ENCODE measurements at regions of chr20 and their contacts with region 1.

Region 1: DNA sequence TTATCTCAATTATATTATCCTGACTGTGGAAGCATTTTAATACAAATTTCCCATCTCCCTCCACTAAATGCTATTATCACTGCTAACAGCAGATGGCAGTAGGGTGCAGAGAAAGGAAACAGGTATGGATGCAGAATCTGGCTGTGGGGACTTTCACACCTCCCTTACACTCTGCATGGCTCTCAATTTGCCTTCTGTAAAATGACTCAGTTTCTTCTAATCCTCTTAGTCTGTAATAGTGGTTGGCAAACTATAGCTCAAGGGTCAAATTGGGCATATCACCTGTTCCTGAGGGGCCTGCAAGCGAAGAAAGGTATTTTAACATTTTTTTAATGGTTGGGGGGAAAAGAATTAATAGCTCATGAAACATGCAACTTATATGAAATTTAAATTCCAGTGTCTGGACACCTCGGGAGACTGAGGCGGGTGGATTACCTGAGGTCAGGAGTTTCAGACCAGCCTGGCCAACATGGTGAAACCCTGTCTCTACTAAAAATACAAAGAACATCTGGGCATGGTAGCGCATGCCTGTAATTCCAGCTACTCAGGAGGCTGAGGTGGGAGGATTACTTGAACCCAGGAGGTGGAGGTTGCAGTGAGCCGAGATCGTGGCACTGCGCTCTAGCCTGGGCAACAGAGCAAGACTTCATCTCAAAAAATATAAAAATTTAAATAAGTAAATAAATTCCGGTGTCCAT is 83.5 kb downstream of the ZMYND8 start:
- DNase-seq: peak; percentile 82
- H3K4me3 Mint-ChIP-seq: no peak overlapping the region
- H3K27ac Mint-ChIP-seq: peak overlapping the region; percentile 90
- H3K4me1 Mint-ChIP-seq: peaks cover 42% of the 10 kb centered on the region
- H3K27me3 Mint-ChIP-seq: no peaks in the 10 kb centered on the region
- CTCF ChIP-seq: peak; percentile 92

Region 2: DNA sequence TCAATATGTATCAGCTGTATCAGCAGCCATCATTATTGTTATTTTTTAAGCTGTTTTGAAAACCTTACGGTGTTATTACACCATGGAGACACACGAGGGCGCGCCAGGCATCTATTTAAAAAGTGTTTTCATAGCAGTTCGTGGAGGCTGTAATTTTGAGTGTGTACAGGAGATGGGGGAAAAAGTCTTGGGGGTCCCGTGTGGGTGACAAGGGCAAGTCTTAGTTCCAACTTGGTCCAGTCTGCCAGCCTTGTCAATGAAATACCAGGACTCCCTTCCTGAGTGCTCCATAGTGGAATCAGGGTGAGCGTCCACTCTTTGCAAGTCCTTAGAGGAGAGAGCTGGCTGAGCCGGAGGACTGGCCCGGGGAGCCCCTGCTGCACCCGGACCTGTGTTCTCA is 520.3 kb before region 1 on chr20:
- CTCF ChIA-PET with region 1: interaction called, 10 read pairs
- intact Hi-C with region 1: no loop called
- DNase-seq: peak; percentile 80
- H3K4me3 Mint-ChIP-seq: peak overlapping the region; percentile 0
- H3K27ac Mint-ChIP-seq: no peak overlapping the region
- H3K4me1 Mint-ChIP-seq: peaks cover 12% of the 10 kb centered on the region
- H3K27me3 Mint-ChIP-seq: no peaks in the 10 kb centered on the region
- CTCF ChIP-seq: peak; percentile 82

Region 3: DNA sequence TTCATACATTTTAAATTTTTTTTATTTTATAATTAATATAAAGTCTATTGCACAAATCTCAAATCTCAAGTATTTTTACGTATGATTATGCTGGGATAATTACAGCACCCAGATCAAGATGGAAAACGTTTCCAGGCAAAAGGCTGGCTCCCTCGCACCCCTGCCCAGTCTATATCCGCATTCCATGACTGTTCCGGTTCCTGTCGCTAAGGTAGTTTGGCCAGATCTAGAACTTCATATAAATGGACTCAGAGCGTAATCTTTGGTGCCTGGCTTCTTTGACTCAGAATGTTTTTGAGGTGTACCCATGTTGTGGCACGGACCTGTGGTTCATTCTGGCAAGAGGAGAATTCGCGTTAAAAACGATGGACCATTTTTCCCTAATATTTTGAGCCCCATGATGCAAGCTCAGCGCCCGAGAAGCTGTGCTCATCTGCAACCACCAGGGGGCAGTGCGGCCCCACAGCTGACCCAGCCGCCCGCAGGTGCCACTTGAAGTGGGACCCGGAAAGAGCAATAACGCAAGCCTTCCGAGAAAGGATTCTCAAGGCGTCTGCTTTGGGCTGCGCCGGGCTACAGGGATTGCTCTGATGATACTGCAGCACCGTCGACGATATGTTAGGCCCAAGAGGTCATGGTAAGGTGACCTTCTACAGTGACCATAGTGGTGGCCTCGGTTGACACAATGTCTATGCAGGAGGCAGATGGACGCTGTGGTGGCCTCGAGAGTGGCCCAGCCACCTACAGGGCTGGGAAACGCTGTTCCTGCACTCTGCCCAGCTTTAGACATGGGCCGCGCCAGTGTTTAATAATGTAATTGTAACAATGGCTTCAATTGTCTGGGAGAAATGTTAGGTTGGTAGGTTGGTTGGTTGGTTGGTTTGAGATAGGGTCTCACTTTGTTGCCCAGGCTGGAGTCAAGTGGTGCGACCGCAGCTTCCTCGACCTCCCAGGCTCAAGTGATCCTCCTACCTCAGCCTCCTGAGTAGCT is 76.7 kb before region 1 on chr20:
- CTCF ChIA-PET with region 1: interaction called, 4 read pairs
- intact Hi-C with region 1: loop called (anchors 1 kb)
- DNase-seq: peak; percentile 95
- H3K4me3 Mint-ChIP-seq: peak overlapping the region; percentile 53
- H3K27ac Mint-ChIP-seq: no peak overlapping the region
- H3K4me1 Mint-ChIP-seq: peaks cover 38% of the 10 kb centered on the region
- H3K27me3 Mint-ChIP-seq: no peaks in the 10 kb centered on the region
- CTCF ChIP-seq: peak; percentile 99

Region 4: DNA sequence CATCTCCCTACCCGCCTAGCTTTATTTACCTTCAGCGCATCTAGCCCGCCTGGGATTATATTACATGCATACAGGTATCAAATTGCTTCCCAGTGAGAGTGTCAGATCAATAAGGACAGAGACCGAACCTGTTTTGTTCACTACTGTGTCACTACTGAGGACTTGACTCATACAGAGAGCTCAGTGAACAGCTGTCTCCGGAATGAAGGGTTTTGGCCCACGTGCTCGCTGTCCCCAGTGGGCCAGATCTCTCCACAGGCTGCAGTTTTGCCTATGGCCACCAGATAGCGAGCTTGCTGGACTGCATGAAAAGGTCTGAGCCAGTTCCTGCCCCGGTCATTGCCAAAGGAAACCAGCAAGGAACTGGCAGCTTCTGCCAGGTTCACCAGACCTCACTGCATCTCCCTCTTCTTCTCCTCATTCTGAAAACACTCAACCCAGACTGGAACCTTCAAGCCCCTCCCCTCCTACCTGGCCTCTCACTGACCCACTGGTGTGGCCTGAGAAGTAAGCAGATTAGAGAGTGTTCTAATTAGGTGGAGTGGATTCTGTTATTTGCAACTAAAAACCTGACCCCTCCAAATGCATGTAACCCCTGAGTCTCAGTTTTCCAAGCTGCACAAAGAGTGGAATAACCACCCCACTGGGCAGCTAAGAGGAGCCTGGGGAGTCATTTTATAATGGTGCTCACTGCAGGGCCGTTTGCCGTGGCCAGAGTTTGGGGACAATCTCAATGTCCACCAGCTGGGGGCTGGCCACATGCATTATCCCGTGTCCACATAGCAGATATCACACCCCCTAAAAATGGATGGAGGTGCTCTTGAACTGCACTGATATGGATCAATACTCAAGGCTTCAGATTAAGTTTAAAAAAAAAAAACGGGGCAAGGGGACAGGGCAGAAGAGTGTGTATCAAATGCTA is 67.2 kb before region 1 on chr20:
- CTCF ChIA-PET with region 1: interaction called, 30 read pairs
- intact Hi-C with region 1: no loop called
- DNase-seq: peak; percentile 93
- H3K4me3 Mint-ChIP-seq: peak overlapping the region; percentile 51
- H3K27ac Mint-ChIP-seq: peak overlapping the region; percentile 75
- H3K4me1 Mint-ChIP-seq: peaks cover 61% of the 10 kb centered on the region
- H3K27me3 Mint-ChIP-seq: no peaks in the 10 kb centered on the region
- CTCF ChIP-seq: peak; percentile 99

Region 5: DNA sequence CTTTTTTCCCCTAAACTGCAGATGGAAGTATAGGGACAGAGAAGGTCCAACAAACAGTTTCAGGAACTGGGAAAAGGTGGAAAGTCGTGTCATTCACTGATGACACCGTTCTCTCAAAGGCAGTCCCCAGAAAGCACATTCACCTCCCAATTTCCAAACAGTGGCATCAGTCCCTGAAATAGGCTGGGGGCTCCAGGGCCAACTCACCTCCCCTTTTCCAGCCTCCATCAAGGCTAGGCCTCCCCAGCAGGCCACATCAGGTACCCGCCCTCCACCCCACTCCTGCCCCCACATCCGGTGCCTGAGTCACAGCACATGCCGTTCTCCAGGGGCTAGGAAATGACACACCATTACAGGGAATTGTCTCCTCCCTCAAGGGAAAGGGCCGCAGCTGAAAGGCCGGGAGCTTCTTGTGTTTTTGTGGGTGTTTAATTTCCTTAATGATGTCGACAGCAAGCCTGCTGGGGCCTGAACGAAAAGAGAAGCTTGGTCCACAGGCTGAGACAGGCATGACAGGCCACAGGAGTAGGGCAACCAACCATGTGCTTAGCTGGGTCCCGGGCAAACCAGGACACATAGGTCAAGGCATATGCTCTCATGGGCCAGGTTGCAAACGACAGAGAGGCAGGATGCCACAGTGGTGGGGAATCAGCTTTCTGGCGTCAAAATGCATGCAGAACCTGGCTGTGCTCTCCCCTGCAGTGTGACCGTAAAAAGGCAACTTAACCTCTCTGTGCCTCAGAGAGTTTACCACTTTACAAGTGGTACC is 44.3 kb after region 1 on chr20:
- CTCF ChIA-PET with region 1: interaction called, 17 read pairs
- intact Hi-C with region 1: loop called (anchors 2 kb)
- DNase-seq: peak; percentile 87
- H3K4me3 Mint-ChIP-seq: peak overlapping the region; percentile 54
- H3K27ac Mint-ChIP-seq: peak overlapping the region; percentile 97
- H3K4me1 Mint-ChIP-seq: peaks cover 70% of the 10 kb centered on the region
- H3K27me3 Mint-ChIP-seq: no peaks in the 10 kb centered on the region
- CTCF ChIP-seq: no peak

Region 6: GRCh38 chr20:47356526-47357295 is 83.7 kb after region 1 on chr20 and contains the start of gene ZMYND8:
- CTCF ChIA-PET with region 1: interaction called, 66 read pairs
- intact Hi-C with region 1: loop called (anchors 1 kb)
- DNase-seq: peak; percentile 96
- H3K4me3 Mint-ChIP-seq: no peak within 1 kb of the TSS
- H3K27ac Mint-ChIP-seq: no peak within 1 kb of the TSS
- H3K4me1 Mint-ChIP-seq: no peaks in the 10 kb centered on the region
- H3K27me3 Mint-ChIP-seq: no peaks in the 10 kb centered on the region
- CTCF ChIP-seq: no peak
- total RNA-seq, gene ZMYND8: 53.1 and 77.3 TPM in 2 replicates

Region 7: DNA sequence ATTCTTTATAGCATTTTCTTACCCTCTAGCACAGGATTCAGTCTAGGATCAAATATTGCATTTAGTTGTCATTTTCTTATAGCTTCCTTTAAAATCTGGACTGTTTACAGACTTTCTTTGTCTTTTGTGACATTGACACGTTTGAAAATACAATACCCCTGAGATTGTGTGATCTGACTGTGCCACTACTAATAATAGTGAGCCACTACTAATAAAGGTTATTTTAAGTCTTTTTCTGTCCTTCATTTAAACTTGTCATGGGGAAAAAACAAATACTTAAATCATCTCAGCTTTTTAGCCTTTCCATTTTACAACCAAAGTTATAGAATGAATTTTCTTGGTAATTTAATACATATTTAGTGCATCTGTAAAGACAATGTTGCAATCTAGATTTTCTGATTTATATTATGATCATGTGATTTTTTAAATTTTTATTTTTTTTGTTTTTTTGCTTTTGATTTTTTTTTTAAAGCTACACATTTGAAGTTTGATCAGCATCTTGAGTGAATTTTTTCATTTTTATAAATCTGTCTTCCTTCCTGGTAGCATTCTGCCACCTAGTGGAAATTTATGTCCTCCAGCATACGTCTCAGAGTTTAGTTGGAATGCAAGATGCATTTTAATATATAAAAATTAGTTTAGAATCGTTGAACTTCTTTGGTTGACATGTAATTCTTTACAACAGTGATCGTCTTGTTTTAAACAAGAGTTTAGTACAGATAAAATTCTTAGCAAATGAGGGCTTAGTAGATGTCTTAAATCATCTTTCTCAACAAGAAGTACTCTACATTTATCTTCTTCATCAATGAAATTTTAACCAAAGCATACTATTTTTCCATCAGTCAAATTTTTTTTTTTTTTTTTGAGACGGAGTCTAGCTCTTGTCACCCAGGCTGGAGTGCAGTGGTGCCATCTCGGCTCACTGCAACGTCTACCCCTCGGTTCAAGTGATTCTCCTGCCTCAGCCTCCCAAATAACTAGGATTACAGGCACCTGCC is 348.1 kb after region 1 on chr20:
- CTCF ChIA-PET with region 1: interaction called, 20 read pairs
- intact Hi-C with region 1: loop called (anchors 2 kb)
- DNase-seq: peak; percentile 48
- H3K4me3 Mint-ChIP-seq: no peak overlapping the region
- H3K27ac Mint-ChIP-seq: peak overlapping the region; percentile 11
- H3K4me1 Mint-ChIP-seq: peaks cover 17% of the 10 kb centered on the region
- H3K27me3 Mint-ChIP-seq: no peaks in the 10 kb centered on the region
- CTCF ChIP-seq: peak; percentile 90

Measured in Calu3 (cell line).